ENCODE measurements at regions of chr22 and their contacts with region 1.

Region 1: DNA sequence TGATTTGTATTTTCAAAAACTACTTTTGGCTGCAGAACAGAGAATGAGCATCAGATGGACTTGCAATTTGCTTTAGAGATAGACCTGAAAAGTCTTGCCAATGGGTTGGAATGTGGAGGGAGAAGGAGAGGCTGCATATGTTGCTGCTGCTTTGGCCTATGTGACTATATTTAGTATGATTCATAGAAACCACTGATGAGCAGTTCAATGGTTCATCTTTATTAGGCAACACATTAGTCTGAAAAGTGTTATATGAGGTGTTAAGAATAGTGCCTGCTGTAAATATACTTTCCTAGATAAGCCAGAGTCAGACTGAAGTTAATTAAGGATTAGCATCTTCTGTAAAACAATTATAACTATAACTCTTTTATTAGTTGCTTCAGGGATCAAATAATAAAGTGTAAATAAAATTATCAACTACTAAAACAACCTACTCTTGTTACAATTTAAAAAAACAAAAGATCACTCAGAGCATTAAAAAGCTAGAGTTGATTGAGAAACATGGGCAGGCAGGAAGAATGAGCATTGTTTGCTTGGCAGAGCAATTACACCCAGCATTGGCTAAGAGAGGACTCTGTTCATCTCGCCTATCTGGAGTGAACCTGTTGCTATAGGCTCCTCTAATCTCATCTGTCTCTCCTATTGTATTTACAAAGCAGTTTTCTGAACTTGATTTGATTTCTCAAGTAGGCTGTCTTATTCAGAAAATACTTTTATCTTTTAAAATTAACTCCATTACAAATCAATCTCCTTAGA is 36.3 kb downstream of the HORMAD2 start:
- DNase-seq: no peak
- H3K4me3 ChIP-seq: no peak overlapping the region
- H3K4me1 ChIP-seq: no peaks in the 10 kb centered on the region
- H3K27me3 ChIP-seq: peaks cover 22% of the 10 kb centered on the region

Region 2: DNA sequence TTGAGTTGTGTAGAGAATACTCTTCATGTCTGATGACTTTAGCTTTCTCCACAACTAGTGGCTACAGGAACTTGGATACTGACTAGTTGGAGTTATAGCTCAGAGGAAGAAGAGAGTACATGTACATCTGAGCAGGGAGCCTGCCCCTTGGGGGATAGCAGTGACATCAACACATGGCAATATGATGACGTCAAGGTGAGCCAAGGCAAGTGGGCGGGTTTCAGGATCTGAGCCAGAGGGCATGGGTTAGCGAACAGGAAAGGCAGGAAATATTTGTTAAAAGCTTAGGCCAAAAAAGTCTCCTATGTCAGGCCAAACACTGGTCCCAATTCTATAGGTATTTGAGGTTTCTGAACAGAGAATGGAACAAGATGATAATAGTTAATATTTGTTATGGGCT is 78.3 kb before region 1 on chr22:
- in situ Hi-C with region 1: no loop called
- DNase-seq: no peak
- H3K4me3 ChIP-seq: no peak overlapping the region
- H3K4me1 ChIP-seq: peaks cover 44% of the 10 kb centered on the region
- H3K27me3 ChIP-seq: no peaks in the 10 kb centered on the region

Region 3: DNA sequence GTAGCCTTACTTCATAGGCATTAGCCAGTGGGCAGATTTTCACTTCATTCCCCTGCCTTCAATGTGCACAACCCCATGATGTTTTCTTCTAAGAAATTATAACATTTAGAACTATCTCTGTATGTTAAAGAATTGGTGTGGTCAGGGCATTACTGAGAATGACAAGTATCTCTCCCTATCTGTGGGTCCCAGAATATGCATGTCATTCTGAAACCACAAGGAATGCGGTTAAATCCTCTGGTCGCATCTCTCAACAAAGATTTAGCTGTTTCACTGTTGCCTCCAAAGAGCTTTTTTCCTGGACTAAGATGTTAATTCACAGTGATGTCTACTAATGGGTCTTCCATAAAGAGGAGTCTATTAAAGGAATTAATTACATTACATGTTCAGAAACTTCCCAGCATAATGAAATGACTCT is 67.3 kb after region 1 on chr22:
- in situ Hi-C with region 1: no loop called
- DNase-seq: peak in 1 of 2 experiments; percentile 6
- H3K4me3 ChIP-seq: no peak overlapping the region
- H3K4me1 ChIP-seq: no peaks in the 10 kb centered on the region; the same call in 1 of the 2 replicates
- H3K27me3 ChIP-seq: peaks cover 9% of the 10 kb centered on the region

Region 4: GRCh38 chr22:30253205-30253852 is 136.8 kb after region 1 on chr22:
- in situ Hi-C with region 1: no loop called
- DNase-seq: no peak
- H3K4me3 ChIP-seq: no peak overlapping the region
- H3K4me1 ChIP-seq: peaks cover 7% of the 10 kb centered on the region; the same call in 1 of the 2 replicates
- H3K27me3 ChIP-seq: no peaks in the 10 kb centered on the region

Region 5: GRCh38 chr22:30386960-30387827 is 270.7 kb after region 1 on chr22 and contains the start of gene RNF215:
- in situ Hi-C with region 1: loop called (anchors 25 kb)
- DNase-seq: peak; percentile 74 to 91
- H3K4me3 ChIP-seq: peak within 1 kb of the TSS; percentile 55
- H3K4me1 ChIP-seq: peaks cover 3% of the 10 kb centered on the region; the same call in 1 of the 2 replicates
- H3K27me3 ChIP-seq: no peaks in the 10 kb centered on the region

Measured in HAP-1 (cell line).